CD8-positive, alpha-beta T cell (primary cell): ENCODE measurements at regions of chr11 and their contacts with region 1.

Region 1: DNA sequence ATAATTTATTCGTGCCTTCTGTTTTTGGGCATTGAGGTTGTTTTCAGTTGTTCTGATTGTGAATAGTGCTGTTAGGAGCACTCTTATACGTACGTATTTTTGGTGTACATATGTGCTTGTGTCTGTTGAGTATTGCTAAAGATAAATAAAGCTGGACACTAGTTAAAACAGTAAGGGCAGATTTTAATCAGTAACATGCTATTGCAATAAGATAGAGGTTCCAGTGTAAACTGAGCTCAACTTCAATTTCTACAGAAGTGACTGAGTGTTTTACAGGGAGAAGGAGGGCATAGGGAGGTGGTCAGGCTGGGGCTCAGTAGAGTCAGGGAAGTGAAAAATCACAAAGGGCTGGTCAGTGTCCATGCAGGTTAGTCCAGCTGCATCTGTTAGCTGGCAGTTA is 76.0 kb upstream of the PARVA start:
- DNase-seq: no peak
- ATAC-seq: no peak
- H3K4me3 ChIP-seq: no peak overlapping the region
- H3K4me3 Mint-ChIP-seq: no peak overlapping the region
- H3K27ac ChIP-seq: no peak overlapping the region
- H3K27ac Mint-ChIP-seq: no peak overlapping the region
- H3K4me1 ChIP-seq: no peaks in the 10 kb centered on the region
- H3K4me1 Mint-ChIP-seq: no peaks in the 10 kb centered on the region
- H3K27me3 ChIP-seq: no peaks in the 10 kb centered on the region
- H3K27me3 Mint-ChIP-seq: no peaks in the 10 kb centered on the region
- CTCF ChIP-seq: no peak

Region 2: GRCh38 chr11:12288212-12288930 is 13.0 kb before region 1 on chr11:
- CTCF ChIA-PET with region 1: interaction called, 13 read pairs
- POLR2A ChIA-PET with region 1: no interaction called
- intact Hi-C with region 1: no loop called
- DNase-seq: peak in 8 of 9 experiments; percentile 21 to 59 (median 47)
- ATAC-seq: no peak
- H3K4me3 ChIP-seq: no peak overlapping the region
- H3K4me3 Mint-ChIP-seq: no peak overlapping the region
- H3K27ac ChIP-seq: no peak overlapping the region
- H3K27ac Mint-ChIP-seq: no peak overlapping the region
- H3K4me1 ChIP-seq: peaks cover 8% of the 10 kb centered on the region
- H3K4me1 Mint-ChIP-seq: peaks cover 7% of the 10 kb centered on the region
- H3K27me3 ChIP-seq: no peaks in the 10 kb centered on the region
- H3K27me3 Mint-ChIP-seq: no peaks in the 10 kb centered on the region
- CTCF ChIP-seq: peak; percentile 59

Region 3: DNA sequence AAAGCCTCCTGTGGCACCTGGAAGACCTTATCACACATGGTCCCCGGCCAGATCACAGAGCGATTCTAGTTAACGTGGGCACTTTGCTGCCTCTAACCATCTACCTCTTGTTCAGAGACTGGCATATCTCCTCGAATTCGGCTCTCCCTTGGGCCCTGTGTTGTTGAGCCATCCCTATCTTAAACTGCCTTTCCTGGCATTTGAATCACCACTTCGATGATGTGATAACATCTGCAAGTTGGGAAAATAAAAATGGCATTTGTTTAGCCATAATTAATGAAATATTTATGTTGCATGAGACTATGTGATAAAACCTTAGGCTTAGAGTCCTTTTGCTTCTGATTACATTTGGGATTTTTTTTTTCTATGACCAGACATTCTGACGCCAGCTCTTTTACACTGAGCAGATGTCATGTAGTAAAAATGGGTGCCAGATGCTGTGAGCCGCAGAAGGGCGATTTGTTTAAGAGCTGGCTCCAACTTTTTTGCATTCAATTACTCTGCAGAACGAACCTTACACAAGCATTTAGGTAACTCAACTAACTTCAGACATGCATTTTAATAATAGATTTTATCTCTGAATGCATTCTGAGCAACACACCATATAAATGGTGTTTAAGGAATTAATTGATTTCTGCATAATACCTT is 17.5 kb after region 1 on chr11:
- CTCF ChIA-PET with region 1: no interaction called
- POLR2A ChIA-PET with region 1: no interaction called
- intact Hi-C with region 1: no loop called
- DNase-seq: no peak
- ATAC-seq: no peak
- H3K4me3 ChIP-seq: no peak overlapping the region
- H3K4me3 Mint-ChIP-seq: no peak overlapping the region
- H3K27ac ChIP-seq: no peak overlapping the region
- H3K27ac Mint-ChIP-seq: no peak overlapping the region
- H3K4me1 ChIP-seq: peaks cover 6% of the 10 kb centered on the region
- H3K4me1 Mint-ChIP-seq: peaks cover 19% of the 10 kb centered on the region
- H3K27me3 ChIP-seq: no peaks in the 10 kb centered on the region
- H3K27me3 Mint-ChIP-seq: peaks cover 6% of the 10 kb centered on the region
- CTCF ChIP-seq: no peak

Region 4: GRCh38 chr11:12411806-12412727 is 110.7 kb after region 1 on chr11:
- CTCF ChIA-PET with region 1: no interaction called
- POLR2A ChIA-PET with region 1: no interaction called
- intact Hi-C with region 1: no loop called
- DNase-seq: peak in 5 of 9 experiments; percentile 13 to 39 (median 21)
- ATAC-seq: no peak
- H3K4me3 ChIP-seq: no peak overlapping the region
- H3K4me3 Mint-ChIP-seq: no peak overlapping the region
- H3K27ac ChIP-seq: no peak overlapping the region
- H3K27ac Mint-ChIP-seq: no peak overlapping the region
- H3K4me1 ChIP-seq: no peaks in the 10 kb centered on the region
- H3K4me1 Mint-ChIP-seq: no peaks in the 10 kb centered on the region
- H3K27me3 ChIP-seq: no peaks in the 10 kb centered on the region
- H3K27me3 Mint-ChIP-seq: peaks cover 6% of the 10 kb centered on the region
- CTCF ChIP-seq: peak; percentile 32